Astrocyte of the cerebellum (primary cell): ENCODE measurements at regions of chr1 and their contacts with region 1.

Region 1: DNA sequence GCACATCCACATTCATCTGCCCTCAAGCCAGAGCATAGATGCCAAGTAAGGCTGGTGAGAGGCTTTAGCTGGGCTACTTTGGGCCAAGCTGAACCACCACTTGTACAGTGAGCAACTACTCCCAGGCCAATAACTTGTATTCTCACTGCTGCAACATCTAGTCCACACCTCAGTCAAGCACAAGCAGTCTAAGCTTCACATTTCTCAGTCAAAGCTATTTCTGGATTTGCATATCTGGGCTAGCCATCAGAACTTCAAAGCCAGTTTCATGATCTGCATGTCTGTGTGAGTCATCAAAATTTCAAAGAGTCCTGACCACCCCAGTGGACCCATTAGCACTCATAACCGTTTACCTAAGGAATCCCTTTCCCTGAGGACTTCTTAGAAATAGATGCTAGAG is 77.7 kb upstream of the DIRAS3 start:
- DNase-seq: peak; percentile 75
- H3K4me3 ChIP-seq: no peak overlapping the region
- CTCF ChIP-seq: no peak

Region 2: DNA sequence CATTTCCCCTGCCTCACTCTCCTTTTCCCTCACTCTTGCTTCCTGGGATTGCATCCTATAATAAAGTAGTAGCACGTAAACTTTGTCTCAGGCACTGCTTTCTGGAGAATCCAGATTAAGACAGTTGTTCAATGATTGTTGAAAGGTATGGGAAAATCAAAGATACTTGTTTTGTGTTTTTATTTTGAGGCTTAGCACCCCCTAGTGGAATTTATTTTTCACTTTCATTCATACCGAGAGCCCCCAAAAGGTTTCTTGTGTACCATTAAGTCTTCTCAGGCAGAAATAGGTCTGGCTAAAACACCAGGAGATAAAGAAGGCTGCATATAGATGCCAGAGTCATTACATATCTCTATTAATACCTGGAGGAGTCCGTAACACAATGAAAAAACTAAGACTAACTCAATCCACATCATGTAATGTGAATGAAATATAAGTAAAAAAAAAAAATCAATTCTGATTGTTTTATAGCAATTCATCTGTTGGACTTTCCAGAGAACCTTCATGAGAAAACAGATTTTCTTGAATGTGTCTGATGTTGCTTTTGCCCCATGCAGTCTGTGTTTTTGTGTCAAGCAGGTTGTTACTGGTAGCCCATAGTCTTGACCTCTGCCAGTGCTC is 218.1 kb after region 1 on chr1:
- in situ Hi-C with region 1: loop called (anchors 25 kb)
- DNase-seq: peak; percentile 19
- H3K4me3 ChIP-seq: no peak overlapping the region
- CTCF ChIP-seq: peak; percentile 41